ENCODE measurements at regions of chr21 and their contacts with region 1.

Region 1: DNA sequence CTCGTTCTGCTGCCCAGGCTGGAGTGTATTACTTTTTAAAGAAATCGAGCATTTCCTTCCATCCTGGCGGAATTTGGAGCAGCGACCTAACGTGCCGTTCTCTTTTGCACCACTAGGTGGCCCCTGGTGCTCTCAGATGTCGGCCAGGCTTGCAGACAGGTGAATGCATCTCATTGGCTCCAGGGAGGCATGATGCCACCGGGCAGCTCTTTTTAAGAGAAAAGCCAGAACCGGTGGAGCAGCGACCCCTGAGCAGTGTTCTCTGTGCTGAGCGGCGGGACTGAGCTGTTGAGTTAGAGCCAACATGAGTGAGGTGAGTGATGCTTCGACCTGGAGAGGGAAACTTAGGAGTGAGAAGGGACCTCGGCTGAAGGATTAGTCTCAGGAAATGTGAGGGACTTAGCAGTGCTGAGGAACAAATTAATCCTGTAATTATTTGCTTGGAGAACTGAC is at the start of gene PCP4:
- DNase-seq: peak; percentile 75
- ATAC-seq: peak; percentile 71
- total RNA-seq, gene PCP4: 8.5 TPM

Region 2: GRCh38 chr21:40120940-40121575 is 253.8 kb after region 1 on chr21:
- intact Hi-C with region 1: loop called (anchors 10 kb)
- DNase-seq: no peak
- ATAC-seq: no peak